ENCODE measurements at regions of chr11 and their contacts with region 1.

Region 1: GRCh38 chr11:122108192-122108799 is 7.7 kb downstream of the BLID start:
- DNase-seq: peak; percentile 55
- H3K4me3 ChIP-seq: no peak overlapping the region
- H3K27ac ChIP-seq: no peak overlapping the region
- H3K4me1 ChIP-seq: peaks cover 21% of the 10 kb centered on the region
- H3K27me3 ChIP-seq: no peaks in the 10 kb centered on the region
- CTCF ChIP-seq: peak; percentile 59 to 68
- POLR2A ChIP-seq: no peak

Region 2: DNA sequence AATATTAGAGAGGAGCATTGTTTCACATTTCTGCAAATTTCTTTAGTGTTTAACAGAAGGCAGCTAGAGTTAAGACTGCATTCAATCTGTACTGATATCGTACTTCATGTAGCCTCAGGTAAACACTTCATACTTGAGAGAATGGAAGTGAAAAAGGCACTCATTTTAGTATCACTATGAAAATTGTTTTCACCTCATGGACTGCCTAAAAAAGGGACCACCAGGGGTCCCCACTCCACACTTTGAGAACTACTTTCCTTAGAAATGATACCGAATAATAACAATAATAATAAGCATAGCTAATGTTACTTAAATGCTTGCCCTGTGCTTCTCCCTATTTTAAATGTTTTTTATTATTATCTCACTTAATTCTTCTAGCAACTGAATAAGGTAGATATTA is 87.4 kb before region 1 on chr11:
- CTCF ChIA-PET with region 1: interaction called, 43 read pairs
- POLR2A ChIA-PET with region 1: no interaction called
- dilution Hi-C with region 1: no loop called
- intact Hi-C with region 1: no loop called
- DNase-seq: peak; percentile 46
- H3K4me3 ChIP-seq: no peak overlapping the region
- H3K27ac ChIP-seq: no peak overlapping the region
- H3K4me1 ChIP-seq: no peaks in the 10 kb centered on the region
- H3K27me3 ChIP-seq: no peaks in the 10 kb centered on the region
- CTCF ChIP-seq: peak; percentile 38 to 57
- POLR2A ChIP-seq: no peak

Region 3: DNA sequence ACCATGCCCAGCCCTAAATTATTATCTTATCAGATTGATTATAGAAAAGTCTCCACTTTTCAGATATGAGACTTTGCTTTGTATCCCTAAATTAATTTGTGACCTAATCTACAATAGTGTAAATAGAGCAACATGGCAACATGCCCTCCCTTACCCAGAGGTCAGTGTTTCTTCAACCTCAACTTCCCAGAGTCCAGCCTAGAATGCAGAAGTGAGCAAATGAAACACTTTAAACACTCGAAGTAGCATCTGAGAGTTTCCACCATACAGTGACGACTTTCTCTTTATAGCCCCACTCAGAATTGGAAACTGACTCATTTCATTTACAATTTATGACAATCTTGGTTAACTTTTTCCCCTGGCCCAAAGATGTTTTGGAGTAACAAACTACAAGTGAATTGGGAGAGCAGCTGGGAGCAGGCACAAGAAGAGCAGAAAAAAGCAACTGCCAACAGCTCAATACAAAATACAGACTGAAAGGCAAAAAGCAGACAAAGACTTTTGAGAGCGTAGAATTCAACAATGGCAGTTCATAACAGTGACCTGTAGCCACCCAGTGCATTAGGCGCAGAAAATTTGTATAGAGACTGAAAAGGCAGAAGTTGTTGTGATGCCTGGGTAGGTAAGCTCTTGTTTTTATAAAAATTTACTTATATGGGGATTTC is 17.9 kb after region 1 on chr11:
- CTCF ChIA-PET with region 1: interaction called, 10 read pairs
- POLR2A ChIA-PET with region 1: no interaction called
- dilution Hi-C with region 1: no loop called
- intact Hi-C with region 1: no loop called
- DNase-seq: no peak
- H3K4me3 ChIP-seq: no peak overlapping the region
- H3K27ac ChIP-seq: no peak overlapping the region
- H3K4me1 ChIP-seq: no peaks in the 10 kb centered on the region
- H3K27me3 ChIP-seq: no peaks in the 10 kb centered on the region
- CTCF ChIP-seq: no peak
- POLR2A ChIP-seq: no peak

Region 4: GRCh38 chr11:122179961-122180834 is 71.9 kb after region 1 on chr11:
- CTCF ChIA-PET with region 1: interaction called, 12 read pairs
- POLR2A ChIA-PET with region 1: no interaction called
- dilution Hi-C with region 1: no loop called
- intact Hi-C with region 1: no loop called
- DNase-seq: peak; percentile 87
- H3K4me3 ChIP-seq: peak overlapping the region; percentile 29 to 100 (median 99)
- H3K27ac ChIP-seq: peak overlapping the region; percentile 86
- H3K4me1 ChIP-seq: peaks cover 66% of the 10 kb centered on the region
- H3K27me3 ChIP-seq: no peaks in the 10 kb centered on the region
- CTCF ChIP-seq: no peak
- POLR2A ChIP-seq: peak; percentile 84

Region 5: GRCh38 chr11:122235615-122236014 is 127.3 kb after region 1 on chr11:
- CTCF ChIA-PET with region 1: no interaction called
- POLR2A ChIA-PET with region 1: no interaction called
- dilution Hi-C with region 1: no loop called
- intact Hi-C with region 1: no loop called
- DNase-seq: no peak
- H3K4me3 ChIP-seq: no peak overlapping the region
- H3K27ac ChIP-seq: no peak overlapping the region
- H3K4me1 ChIP-seq: peaks cover 3% of the 10 kb centered on the region
- H3K27me3 ChIP-seq: no peaks in the 10 kb centered on the region
- CTCF ChIP-seq: no peak
- POLR2A ChIP-seq: no peak

Region 6: DNA sequence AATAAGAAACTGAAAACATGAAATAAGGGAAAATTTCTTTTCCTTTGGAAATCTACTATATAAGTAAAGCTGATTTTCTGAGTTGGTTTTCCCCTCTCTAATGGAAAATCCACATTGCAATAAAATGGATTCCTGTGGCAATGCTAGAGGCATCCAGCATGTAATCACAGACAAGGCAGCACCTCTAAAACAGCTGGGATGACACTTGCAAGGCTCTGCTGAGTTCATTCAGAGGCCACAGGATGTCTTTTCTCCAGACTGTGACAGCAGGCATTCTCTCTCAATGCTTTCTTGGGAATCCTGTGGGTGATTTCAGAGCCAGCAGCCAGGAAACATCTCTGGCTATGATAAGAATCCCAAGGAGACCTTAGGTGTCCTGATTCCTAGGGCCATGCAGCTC is 209.0 kb after region 1 on chr11:
- CTCF ChIA-PET with region 1: no interaction called
- POLR2A ChIA-PET with region 1: no interaction called
- dilution Hi-C with region 1: no loop called
- intact Hi-C with region 1: no loop called
- DNase-seq: no peak
- H3K4me3 ChIP-seq: no peak overlapping the region
- H3K27ac ChIP-seq: no peak overlapping the region
- H3K4me1 ChIP-seq: no peaks in the 10 kb centered on the region
- H3K27me3 ChIP-seq: peaks cover 0 to 1% of the 10 kb centered on the region in 2 experiments
- CTCF ChIP-seq: no peak
- POLR2A ChIP-seq: no peak

Region 7: GRCh38 chr11:122661182-122661945 is 553.1 kb after region 1 on chr11:
- CTCF ChIA-PET with region 1: no interaction called
- POLR2A ChIA-PET with region 1: no interaction called
- dilution Hi-C with region 1: no loop called
- intact Hi-C with region 1: no loop called
- DNase-seq: no peak
- H3K4me3 ChIP-seq: no peak overlapping the region
- H3K27ac ChIP-seq: no peak overlapping the region
- H3K4me1 ChIP-seq: peaks cover 2% of the 10 kb centered on the region
- H3K27me3 ChIP-seq: no peaks in the 10 kb centered on the region
- CTCF ChIP-seq: no peak
- POLR2A ChIP-seq: no peak

Measured in endothelial cell of umbilical vein (primary cell).